MCF 10A (cell line): ENCODE measurements at regions of chr9 and their contacts with region 1.

Region 1: GRCh38 chr9:35664531-35665470 is at the start of gene ARHGEF39:
- DNase-seq: peak; percentile 83
- H3K4me3 Mint-ChIP-seq: peak within 1 kb of the TSS; percentile 86
- H3K27ac Mint-ChIP-seq: no peak within 1 kb of the TSS
- H3K4me1 Mint-ChIP-seq: peaks cover 21% of the 10 kb centered on the region
- H3K27me3 Mint-ChIP-seq: no peaks in the 10 kb centered on the region
- CTCF ChIP-seq: no peak
- total RNA-seq, gene ARHGEF39: 2.9 and 5.1 TPM in 2 replicates

Region 2: DNA sequence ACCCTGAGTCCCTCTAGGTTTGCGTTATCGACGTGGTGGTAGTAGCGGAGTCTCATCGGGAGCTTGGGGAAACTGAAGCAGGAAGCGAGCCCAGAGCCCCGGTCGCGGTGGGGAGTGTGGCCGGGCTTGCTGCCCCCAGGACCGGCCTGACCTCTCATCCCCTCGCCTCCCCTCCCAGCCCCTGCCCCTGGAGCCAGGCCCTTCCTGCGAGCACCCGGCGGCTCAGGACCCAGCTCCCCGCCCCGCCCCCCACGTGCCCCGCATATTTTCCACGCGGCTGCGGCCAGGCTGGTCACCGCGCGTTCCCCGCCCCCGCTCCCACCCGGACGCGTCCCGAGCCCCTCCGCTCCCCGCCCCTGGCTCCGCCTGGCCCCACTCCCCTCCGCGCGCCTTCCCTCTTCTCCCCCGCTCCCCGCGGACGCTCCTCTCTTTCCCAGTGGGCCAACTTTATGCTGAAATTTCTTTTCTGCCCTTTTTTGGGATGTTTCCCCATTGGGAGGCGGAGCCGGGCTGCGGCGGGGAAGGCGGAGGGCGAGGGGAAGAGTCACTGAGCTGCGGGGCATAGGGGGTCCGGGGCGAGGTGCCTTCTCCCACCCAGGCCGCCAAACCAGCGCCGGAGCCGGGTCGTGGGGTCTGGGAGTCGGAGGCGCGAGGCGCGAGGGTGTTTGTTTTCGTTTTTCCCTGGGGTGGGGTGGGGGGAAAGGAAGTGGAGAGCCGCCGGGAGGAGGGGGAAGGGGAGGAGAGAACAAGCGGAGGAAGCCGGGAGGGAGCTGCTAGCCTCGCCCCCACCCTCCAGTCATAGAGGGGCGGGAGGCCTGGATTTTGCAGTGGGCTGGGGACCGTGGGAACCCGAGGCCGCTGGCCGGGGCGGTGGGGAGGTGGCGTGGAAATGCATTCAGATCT is 25.9 kb after region 1 on chr9:
- CTCF ChIA-PET with region 1: interaction called, 29 read pairs
- POLR2A ChIA-PET with region 1: interaction called, 29 read pairs
- intact Hi-C with region 1: no loop called
- DNase-seq: peak; percentile 52
- H3K4me3 Mint-ChIP-seq: peak overlapping the region; percentile 79
- H3K27ac Mint-ChIP-seq: peak overlapping the region; percentile 72
- H3K4me1 Mint-ChIP-seq: peaks cover 24% of the 10 kb centered on the region
- H3K27me3 Mint-ChIP-seq: no peaks in the 10 kb centered on the region
- CTCF ChIP-seq: no peak

Region 3: DNA sequence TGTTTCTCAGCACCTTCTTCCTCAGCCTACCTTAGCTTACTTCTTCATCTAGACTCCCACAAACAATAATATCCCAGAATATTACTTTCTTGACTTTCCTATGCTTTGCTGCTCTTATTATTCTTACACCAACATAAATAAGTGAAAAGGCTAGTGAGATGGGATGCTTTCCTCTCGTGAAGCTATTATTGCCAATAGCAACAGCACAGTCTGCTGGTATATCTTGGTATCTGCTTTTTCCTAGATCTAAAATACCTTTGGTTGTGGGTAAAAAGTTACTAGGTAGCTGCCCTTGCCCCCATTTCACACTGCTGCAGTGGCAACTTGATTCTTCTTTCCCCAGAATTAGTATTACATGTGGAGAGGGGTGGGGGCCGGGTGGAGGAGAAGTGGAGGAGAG is 445.6 kb after region 1 on chr9:
- CTCF ChIA-PET with region 1: no interaction called
- POLR2A ChIA-PET with region 1: no interaction called
- intact Hi-C with region 1: no loop called
- DNase-seq: no peak
- H3K4me3 Mint-ChIP-seq: no peak overlapping the region
- H3K27ac Mint-ChIP-seq: no peak overlapping the region
- H3K4me1 Mint-ChIP-seq: no peaks in the 10 kb centered on the region
- H3K27me3 Mint-ChIP-seq: no peaks in the 10 kb centered on the region
- CTCF ChIP-seq: no peak

Region 4: DNA sequence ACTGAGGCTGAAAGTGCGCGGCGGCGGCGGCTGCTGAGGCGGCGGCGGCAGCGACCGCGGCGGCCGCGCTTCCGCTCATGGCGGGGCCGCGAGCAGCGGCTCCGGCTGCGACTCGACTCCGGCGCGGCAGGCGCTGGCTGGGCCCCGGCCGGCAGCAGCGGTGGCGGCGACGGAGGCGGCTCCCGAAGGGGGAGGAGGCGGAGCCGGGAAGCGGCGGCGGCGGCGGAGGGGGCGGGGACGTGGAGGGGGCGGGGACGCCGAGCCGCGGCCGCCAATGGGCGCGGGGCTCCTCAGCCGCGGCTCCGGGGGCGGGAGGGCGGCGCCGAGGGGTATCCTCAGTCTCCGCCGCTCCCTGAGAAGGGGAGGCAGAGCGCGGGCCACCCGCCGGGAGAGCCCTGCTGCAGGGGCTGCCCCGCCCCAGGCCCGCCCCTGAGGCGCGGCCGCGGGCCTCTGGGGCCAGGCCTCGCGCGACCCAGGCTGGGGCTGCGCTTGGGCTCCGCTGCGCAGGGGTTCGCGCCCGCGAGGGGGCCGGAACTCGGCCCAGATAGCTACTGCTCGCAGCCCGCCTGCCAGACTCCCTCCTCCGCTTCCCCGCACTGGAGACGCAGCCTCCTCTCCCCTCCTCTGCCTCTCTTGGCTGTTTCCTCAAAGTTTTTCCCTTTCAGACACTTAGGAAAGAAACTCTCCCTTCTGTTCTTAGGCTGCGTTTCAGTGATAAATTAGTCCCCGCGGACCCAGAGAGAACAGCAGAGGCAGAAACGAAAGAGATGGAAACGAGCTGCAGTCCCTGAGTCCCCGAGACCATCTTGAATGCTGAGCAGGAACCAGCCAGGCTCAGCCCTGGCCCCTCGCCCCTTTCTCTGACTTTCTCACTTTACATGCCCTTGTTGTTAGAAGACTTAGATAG is 822.9 kb after region 1 on chr9:
- CTCF ChIA-PET with region 1: no interaction called
- POLR2A ChIA-PET with region 1: no interaction called
- intact Hi-C with region 1: no loop called
- DNase-seq: peak; percentile 88
- H3K4me3 Mint-ChIP-seq: peak overlapping the region; percentile 77
- H3K27ac Mint-ChIP-seq: peak overlapping the region; percentile 80
- H3K4me1 Mint-ChIP-seq: peaks cover 7% of the 10 kb centered on the region
- H3K27me3 Mint-ChIP-seq: no peaks in the 10 kb centered on the region
- CTCF ChIP-seq: no peak